ENCODE measurements at regions of chr7 and their contacts with region 1.

Region 1: GRCh38 chr7:158164101-158165095 is 423.2 kb downstream of the PTPRN2 start:
- DNase-seq: no peak

Region 2: DNA sequence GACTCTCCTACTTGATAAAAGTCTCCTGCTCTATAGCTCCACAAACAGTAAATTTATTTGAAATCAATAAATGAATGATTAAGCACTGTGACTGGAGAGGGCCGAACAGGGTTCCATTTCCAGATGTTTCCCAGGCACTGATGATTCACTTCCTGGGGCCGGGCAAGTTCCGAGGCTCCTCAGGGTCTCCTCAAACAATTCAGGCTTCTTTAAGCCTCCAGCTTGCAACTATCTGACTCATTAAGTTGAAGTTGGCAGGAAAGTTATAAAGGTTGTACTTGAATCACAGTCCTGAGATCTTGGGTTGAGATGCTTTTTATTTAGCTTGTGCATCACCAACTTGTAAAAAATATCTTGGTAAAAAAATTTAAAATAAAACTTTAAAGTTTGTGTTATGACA is 214.7 kb before region 1 on chr7:
- intact Hi-C with region 1: no loop called
- DNase-seq: peak; percentile 4

Region 3: DNA sequence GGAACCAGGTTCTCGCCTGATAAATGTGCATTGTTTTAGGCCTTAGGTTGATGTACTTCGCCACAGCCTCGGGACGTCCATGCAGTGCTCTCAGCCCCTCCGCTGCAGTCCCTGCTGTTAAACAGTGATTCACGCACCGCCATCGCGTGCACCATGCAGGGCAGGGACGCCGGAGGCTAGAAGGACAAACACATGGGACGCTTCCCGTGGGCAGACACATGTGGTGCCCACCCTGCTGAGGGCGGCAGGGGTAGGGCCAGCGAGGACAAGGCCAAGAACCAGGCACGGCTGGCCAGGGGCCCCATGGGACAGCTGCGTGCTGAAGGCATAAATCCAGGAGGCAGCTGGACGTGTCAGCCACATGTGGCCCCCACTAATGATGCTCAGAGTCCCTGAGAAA is 28.6 kb after region 1 on chr7:
- intact Hi-C with region 1: loop called in 1 of 2 experiments (anchors 1 kb)
- DNase-seq: no peak